HEK293T (cell line): ENCODE measurements at regions of chr4 and their contacts with region 1.

Region 1: DNA sequence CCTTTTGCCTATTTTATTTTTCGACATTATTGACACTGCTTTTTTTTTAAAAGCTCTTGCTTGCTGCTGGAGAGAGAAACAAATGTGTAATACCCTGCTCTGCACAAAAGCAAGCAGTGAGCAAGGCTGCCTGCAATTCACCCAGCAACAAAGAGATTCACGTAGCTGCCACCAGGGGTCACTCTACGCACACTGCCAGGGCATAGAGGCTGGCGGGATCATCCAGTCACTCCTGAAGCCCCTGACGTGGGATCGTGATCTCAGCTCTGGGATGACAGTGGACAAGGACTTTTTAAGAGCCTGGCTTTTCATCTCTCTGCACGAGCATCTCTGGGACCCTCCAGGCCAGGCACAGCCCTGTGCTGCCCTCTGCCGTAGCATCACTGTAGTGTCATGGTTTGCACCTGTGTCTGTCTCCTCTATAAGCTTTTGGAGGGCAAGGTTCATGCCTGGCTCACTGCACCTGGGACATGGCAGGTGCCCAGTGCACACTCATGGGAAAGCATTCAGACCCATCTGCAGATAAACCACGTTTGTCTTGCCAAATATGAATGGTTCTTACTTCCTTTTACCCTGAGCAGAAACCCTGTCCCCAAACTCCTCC is 19.8 kb downstream of the C4orf50 start:
- DNase-seq: peak; percentile 83

Region 2: GRCh38 chr4:5988086-5988845 is 10.2 kb before region 1 on chr4:
- CTCF ChIA-PET with region 1: interaction called, 10 read pairs
- POLR2A ChIA-PET with region 1: no interaction called
- DNase-seq: no peak

Region 3: GRCh38 chr4:6087673-6088341 is 89.4 kb after region 1 on chr4:
- CTCF ChIA-PET with region 1: interaction called, 43 read pairs
- POLR2A ChIA-PET with region 1: no interaction called
- DNase-seq: peak; percentile 68

Region 4: GRCh38 chr4:6250235-6250983 is 252.0 kb after region 1 on chr4:
- CTCF ChIA-PET with region 1: interaction called, 12 read pairs
- POLR2A ChIA-PET with region 1: no interaction called
- DNase-seq: peak; percentile 70

Region 5: DNA sequence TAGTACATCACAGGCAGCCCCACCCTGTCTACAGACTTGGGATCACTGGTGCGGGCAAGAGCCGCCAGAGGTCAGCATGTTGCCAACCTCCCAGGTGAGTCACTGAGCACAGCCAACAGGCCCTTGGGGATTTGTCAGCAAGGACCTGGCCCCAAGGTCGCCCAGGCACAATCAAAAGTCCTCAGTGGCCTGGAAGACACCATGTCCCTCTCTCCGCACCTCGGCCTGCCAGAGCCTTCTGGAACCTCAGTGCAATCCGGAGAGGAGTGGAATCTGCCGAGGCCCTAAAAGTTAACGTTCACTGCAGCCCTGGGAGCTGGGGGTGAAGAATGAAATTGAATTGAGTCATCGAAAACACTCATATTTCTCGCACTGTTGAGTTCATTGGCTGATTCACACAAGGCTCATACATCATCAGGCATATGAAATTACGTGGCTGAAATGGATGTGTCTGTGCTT is 345.5 kb after region 1 on chr4:
- CTCF ChIA-PET with region 1: no interaction called
- POLR2A ChIA-PET with region 1: no interaction called
- DNase-seq: no peak